MCF 10A (cell line): ENCODE measurements at regions of chr2 and their contacts with region 1.

Region 1: GRCh38 chr2:203782262-203782976 is 76.0 kb downstream of the CD28 start:
- DNase-seq: peak; percentile 95
- H3K4me3 Mint-ChIP-seq: no peak overlapping the region
- H3K27ac Mint-ChIP-seq: peak overlapping the region; percentile 87
- H3K4me1 Mint-ChIP-seq: peaks cover 9% of the 10 kb centered on the region
- H3K27me3 Mint-ChIP-seq: no peaks in the 10 kb centered on the region
- CTCF ChIP-seq: peak; percentile 85

Region 2: DNA sequence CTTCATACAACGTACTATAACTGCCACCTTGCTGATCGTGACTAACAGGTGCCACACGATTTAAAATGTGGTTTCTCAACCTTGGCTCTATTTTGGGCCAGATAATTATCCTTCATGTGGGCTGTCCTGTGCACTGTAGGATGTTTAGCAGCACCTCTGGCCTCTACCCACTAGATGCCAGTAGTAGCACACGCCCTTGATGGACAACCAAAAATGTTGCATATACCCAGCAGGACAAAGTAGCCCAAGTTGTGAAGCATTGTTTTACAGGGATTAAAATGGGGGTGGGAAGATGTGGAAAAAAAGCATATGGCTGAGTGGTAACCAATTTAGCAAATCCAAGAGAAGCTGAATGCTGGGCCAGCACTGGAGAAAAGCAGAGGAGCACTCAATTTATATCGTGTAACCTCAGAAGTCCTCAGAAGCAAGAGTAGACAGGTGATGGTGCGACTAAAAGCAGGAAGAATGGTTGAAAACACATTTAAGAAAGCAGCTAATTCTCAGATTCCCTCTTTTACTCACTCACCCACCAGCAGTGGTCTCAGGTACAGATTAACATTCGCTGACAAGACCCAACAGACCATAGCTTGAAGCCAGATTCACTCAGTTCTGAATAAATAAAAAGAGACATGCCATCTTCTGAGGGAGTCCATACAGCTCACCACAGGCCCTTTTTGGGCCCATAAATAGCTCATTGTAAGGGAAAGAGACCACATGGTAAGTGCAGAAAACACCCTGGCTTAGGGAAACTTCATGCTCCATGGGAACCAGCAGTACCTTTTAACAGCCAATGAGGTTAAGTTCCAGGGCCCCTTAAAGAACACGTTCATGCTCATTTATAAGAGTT is 297.9 kb before region 1 on chr2:
- CTCF ChIA-PET with region 1: interaction called, 4 read pairs
- POLR2A ChIA-PET with region 1: no interaction called
- intact Hi-C with region 1: loop called (anchors 1 kb)
- DNase-seq: peak; percentile 58
- H3K4me3 Mint-ChIP-seq: no peak overlapping the region
- H3K27ac Mint-ChIP-seq: no peak overlapping the region
- H3K4me1 Mint-ChIP-seq: no peaks in the 10 kb centered on the region
- H3K27me3 Mint-ChIP-seq: no peaks in the 10 kb centered on the region
- CTCF ChIP-seq: peak; percentile 47

Region 3: DNA sequence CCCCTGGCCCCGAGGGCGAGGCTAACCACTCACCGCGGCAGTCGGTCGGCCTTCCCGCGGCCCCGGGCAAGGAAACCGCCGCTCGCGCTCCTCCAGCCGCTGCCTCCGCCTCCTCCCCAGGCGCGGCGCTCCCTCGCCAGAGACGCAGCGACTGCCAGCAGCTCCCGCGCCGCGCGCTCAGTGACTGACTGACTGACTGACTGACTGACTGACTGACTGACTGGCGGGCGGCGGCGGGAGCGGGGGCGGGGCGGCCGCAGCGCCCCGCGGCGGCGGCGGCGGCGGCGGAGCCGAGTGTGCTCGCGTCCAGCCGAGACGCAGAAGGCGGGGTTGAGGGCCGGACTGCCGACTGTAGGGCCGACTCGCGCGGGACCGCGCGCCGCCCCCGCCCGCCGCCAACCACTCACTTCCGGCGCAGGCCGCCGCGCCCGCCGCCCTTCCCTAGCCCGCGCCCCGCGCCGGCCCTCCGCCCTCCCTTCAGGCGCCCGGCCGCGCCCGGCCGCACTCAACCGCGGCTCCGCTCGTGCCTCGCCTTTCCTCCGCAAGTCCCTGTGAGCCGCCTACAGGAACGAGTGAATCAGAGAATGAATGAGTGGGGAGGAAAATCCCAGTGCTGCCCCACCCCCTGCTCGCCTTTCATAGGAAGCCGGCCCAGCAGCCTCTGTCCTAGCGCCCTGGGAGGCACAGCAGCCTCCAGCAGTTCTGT is 247.2 kb before region 1 on chr2 and contains the start of gene RAPH1:
- CTCF ChIA-PET with region 1: no interaction called
- POLR2A ChIA-PET with region 1: no interaction called
- intact Hi-C with region 1: loop called (anchors 1 kb)
- DNase-seq: peak; percentile 84
- H3K4me3 Mint-ChIP-seq: peak within 1 kb of the TSS; percentile 77
- H3K27ac Mint-ChIP-seq: peak within 1 kb of the TSS; percentile 93
- H3K4me1 Mint-ChIP-seq: peaks cover 17% of the 10 kb centered on the region
- H3K27me3 Mint-ChIP-seq: no peaks in the 10 kb centered on the region
- CTCF ChIP-seq: no peak
- total RNA-seq, gene RAPH1: 78.0 and 79.8 TPM in 2 replicates

Region 4: GRCh38 chr2:203683932-203684556 is 98.4 kb before region 1 on chr2:
- CTCF ChIA-PET with region 1: no interaction called
- POLR2A ChIA-PET with region 1: no interaction called
- intact Hi-C with region 1: loop called (anchors 2 kb)
- DNase-seq: peak; percentile 96
- H3K4me3 Mint-ChIP-seq: peak overlapping the region; percentile 30
- H3K27ac Mint-ChIP-seq: peak overlapping the region; percentile 92
- H3K4me1 Mint-ChIP-seq: peaks cover 66% of the 10 kb centered on the region
- H3K27me3 Mint-ChIP-seq: no peaks in the 10 kb centered on the region
- CTCF ChIP-seq: no peak

Region 5: DNA sequence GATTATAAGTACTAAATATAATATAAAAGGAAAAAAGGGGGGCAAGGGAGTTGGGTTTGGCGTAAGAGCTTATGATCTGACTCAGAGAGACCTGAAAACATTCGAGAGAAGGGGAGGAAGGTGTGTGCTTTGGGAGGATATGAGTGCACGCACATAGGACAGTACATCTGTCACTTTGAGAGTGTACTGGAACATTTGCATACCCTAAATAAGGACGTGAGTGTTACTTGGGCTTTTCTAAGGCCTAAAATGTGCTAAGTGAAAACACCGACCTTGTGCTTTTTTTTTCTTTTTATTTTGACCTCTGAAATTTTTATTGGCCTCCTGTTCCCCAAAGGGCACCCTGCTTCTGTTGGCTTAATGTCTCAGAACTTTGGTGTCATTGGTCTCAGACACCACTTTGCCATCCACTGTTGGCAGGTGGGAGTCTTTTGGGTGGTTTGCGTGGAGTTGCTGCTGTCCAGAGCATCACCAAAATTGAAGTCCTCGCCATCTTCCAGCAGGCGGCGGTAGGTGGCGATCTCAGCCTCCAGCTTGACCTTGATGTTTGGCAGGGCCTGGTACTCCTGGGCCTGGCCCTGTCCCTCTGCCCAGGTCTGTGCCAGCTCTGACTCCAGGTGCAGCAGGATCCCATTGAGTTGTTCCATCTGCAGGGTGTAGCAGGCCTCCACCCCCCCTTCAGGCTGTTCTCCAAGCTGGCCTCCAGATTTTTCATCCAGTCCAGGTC is 18.3 kb before region 1 on chr2:
- CTCF ChIA-PET with region 1: interaction called, 11 read pairs
- POLR2A ChIA-PET with region 1: interaction called, 3 read pairs
- intact Hi-C with region 1: no loop called
- DNase-seq: no peak
- H3K4me3 Mint-ChIP-seq: no peak overlapping the region
- H3K27ac Mint-ChIP-seq: no peak overlapping the region
- H3K4me1 Mint-ChIP-seq: peaks cover 22% of the 10 kb centered on the region
- H3K27me3 Mint-ChIP-seq: no peaks in the 10 kb centered on the region
- CTCF ChIP-seq: no peak

Region 6: DNA sequence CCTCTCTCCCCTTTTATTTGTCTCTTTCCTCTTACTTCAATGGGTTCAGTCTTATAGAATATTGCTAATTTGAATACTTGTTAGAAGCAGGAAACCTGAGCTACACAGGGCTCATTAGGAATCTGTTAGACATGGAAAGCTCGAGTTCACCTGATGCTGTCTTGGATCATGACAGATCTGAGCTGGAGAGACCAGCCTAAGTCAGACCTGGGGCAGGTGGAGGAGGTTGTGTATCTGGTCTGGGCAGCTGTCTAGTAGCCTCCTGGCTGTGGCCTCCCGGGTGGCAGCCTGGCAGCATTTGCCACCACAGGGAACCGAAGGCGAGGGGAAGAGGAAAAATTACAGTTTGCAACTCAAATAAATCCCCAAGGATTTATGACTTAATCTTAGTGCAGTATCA is 340.0 kb after region 1 on chr2:
- CTCF ChIA-PET with region 1: no interaction called
- POLR2A ChIA-PET with region 1: no interaction called
- intact Hi-C with region 1: no loop called
- DNase-seq: no peak
- H3K4me3 Mint-ChIP-seq: no peak overlapping the region
- H3K27ac Mint-ChIP-seq: no peak overlapping the region
- H3K4me1 Mint-ChIP-seq: no peaks in the 10 kb centered on the region
- H3K27me3 Mint-ChIP-seq: peaks cover 71% of the 10 kb centered on the region
- CTCF ChIP-seq: no peak